AG04450 (cell line): ENCODE measurements at regions of chr12 and their contacts with region 1.

Region 1: GRCh38 chr12:57280211-57281062 is 29.4 kb upstream of the STAC3 start:
- DNase-seq: peak; percentile 91
- H3K4me3 ChIP-seq: peak overlapping the region; percentile 38
- H3K27ac ChIP-seq: peak overlapping the region; percentile 74
- H3K27me3 ChIP-seq: no peaks in the 10 kb centered on the region
- CTCF ChIP-seq: no peak

Region 2: DNA sequence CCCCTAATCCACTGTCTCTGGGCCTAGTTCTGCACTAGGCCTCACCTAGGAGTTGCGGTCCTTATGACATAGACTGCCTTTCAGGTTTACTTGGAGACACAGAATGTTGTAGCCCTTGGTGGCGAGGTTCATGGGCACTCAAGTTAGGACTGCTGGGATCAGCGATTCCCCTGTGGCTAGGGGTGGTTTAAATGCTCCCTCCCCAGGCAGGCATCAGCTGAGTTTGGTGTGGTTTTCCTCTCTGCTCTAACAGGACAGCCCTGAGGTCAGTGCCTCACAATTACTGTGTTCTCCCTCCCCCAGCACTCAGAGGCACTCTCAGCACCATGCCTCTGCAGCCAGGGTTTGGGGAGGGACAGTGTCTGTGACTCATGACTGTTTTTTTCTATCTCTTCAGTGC is 300.8 kb before region 1 on chr12:
- CTCF ChIA-PET with region 1: no interaction called
- POLR2A ChIA-PET with region 1: no interaction called
- DNase-seq: no peak
- H3K4me3 ChIP-seq: no peak overlapping the region
- H3K27ac ChIP-seq: no peak overlapping the region
- H3K27me3 ChIP-seq: peaks cover 4% of the 10 kb centered on the region
- CTCF ChIP-seq: no peak

Region 3: GRCh38 chr12:57340104-57340503 is 59.7 kb after region 1 on chr12:
- CTCF ChIA-PET with region 1: interaction called, 11 read pairs
- POLR2A ChIA-PET with region 1: no interaction called
- DNase-seq: peak; percentile 16
- H3K4me3 ChIP-seq: no peak overlapping the region
- H3K27ac ChIP-seq: no peak overlapping the region
- H3K27me3 ChIP-seq: no peaks in the 10 kb centered on the region
- CTCF ChIP-seq: no peak